ENCODE measurements at regions of chr3 and their contacts with region 1.

Region 1: DNA sequence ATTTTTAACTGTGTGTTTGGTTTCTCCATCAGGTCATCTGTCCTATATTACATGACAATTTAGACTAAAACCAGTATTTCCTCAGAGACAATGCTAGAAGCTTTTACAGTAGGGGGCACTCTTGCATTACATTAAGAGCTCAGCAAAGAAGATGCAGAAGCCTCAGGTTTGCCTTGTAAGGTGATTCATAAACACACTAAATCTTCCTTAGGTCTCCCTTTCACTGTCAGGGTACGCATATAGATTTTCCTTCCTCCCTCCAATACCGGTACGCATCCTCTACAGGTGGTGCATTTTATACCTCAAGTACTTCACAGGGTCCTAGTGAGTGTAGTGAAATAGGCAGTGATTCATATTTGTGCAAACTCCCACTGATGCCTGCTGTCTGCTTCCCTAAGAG is 46.5 kb downstream of the CD86 start:
- DNase-seq: peak in 1 of 6 donors; percentile 19
- ATAC-seq: peak; percentile 69 to 94 (median 86)
- H3K4me3 ChIP-seq: no peak overlapping the region
- H3K27ac ChIP-seq: no peak overlapping the region
- H3K4me1 ChIP-seq: no peaks in the 10 kb centered on the region
- H3K27me3 ChIP-seq: no peaks in the 10 kb centered on the region
- CTCF ChIP-seq: peak; percentile 21 to 51 (median 38)

Region 2: DNA sequence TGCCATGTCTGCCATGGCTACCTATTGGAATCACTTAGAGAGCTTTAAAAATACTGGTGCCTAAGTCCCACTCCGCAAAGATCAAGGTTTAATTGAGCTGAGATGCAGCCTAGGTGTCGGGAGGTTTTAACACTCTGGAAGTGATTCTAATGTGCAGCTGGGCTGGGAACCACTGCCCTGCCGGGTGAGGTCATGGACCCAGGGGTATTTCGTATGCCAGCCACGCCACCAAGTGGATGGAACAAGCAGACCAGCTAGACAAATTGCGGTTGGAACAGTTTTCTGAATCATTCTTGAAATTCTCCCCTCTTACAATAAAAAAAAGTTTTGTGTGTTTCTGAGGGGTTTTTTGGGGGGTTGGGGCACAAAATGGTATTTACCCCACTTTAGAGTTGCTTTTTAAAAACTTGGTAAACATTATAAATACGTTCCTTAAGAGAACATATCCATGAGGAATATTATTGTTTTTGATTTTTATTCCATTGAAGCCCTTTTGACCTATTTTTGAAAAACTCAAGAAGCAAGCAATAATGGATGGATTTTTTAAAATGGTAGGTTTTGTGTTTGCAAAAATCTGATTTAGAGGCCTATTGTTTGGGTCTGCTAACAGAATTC is 157.2 kb after region 1 on chr3:
- intact Hi-C with region 1: loop called in 2 of 3 experiments (anchors 5 kb)
- DNase-seq: peak; percentile 72 to 87 (median 77)
- ATAC-seq: peak; percentile 97 to 99 (median 97)
- H3K4me3 ChIP-seq: no peak overlapping the region
- H3K27ac ChIP-seq: no peak overlapping the region
- H3K4me1 ChIP-seq: peaks cover 0 to 4% (median 3%) of the 10 kb centered on the region in 3 donors
- H3K27me3 ChIP-seq: no peaks in the 10 kb centered on the region
- CTCF ChIP-seq: peak in 2 of 4 donors; percentile 35 to 61

Region 3: GRCh38 chr3:122356415-122356814 is 254.8 kb after region 1 on chr3:
- intact Hi-C with region 1: loop called in 1 of 3 experiments (anchors 5 kb)
- DNase-seq: peak; percentile 43 to 65 (median 49)
- ATAC-seq: peak; percentile 80 to 99 (median 94)
- H3K4me3 ChIP-seq: no peak overlapping the region
- H3K27ac ChIP-seq: no peak overlapping the region
- H3K4me1 ChIP-seq: peaks cover 0 to 7% (median 3%) of the 10 kb centered on the region in 3 donors
- H3K27me3 ChIP-seq: no peaks in the 10 kb centered on the region
- CTCF ChIP-seq: peak in 3 of 4 donors; percentile 11 to 27 (median 26)